H1 (cell line): ENCODE measurements at regions of chr9 and their contacts with region 1.

Region 1: GRCh38 chr9:35518226-35518821 is 28.4 kb downstream of the RUSC2 start:
- DNase-seq: no peak
- H3K4me3 ChIP-seq: no peak overlapping the region
- H3K27ac ChIP-seq: no peak overlapping the region
- H3K4me1 ChIP-seq: peaks cover 0 to 26% (median 8%) of the 10 kb centered on the region in 4 experiments; a peak in 6 of 7 replicates
- H3K27me3 ChIP-seq: no peaks in the 10 kb centered on the region
- CTCF ChIP-seq: no peak
- EP300 ChIP-seq: peak in 1 of 2 experiments; percentile 13; a peak in 1 of 3 replicates
- POLR2A ChIP-seq: no peak
- RAD21 ChIP-seq: no peak

Region 2: DNA sequence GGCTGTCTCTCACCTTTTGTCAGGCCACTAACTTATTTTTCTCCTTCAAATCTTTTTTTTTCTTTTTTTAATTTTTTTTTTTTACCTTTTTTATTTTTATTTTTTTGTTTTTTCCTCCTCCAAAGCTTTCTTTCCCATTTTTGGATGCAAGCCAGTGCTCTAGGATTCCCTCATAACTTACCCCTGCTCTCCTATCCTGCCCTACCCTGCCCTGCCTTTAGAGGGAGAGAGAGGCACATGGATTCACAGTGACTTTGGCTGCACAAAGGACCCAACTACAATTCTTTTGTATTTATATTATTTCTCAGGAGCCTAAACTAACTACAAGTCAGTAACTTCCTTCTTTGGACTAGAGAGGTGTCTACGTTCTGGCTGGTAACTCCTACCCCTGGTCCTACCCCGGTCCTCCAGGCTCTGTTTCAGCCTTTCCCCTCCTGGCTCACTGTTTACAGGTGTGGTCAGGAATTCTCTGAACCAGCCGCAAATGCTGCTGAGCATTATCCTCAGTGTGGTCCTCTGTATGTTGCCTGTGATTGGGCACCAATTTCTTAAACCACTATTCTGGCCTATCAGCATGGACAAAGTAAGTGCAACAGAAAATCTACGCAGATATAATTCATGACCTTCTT is 36.9 kb before region 1 on chr9:
- CTCF ChIA-PET with region 1: interaction called, 24 read pairs
- POLR2A ChIA-PET with region 1: no interaction called
- DNase-seq: peak in 1 of 2 experiments; percentile 65
- H3K4me3 ChIP-seq: no peak overlapping the region
- H3K27ac ChIP-seq: no peak overlapping the region
- H3K4me1 ChIP-seq: peaks cover 0 to 3% (median 1%) of the 10 kb centered on the region in 4 experiments; a peak in 1 of 7 replicates
- H3K27me3 ChIP-seq: no peaks in the 10 kb centered on the region
- CTCF ChIP-seq: peak; percentile 66 to 82 (median 75)
- EP300 ChIP-seq: no peak
- POLR2A ChIP-seq: no peak
- RAD21 ChIP-seq: peak; percentile 87 to 90

Region 3: DNA sequence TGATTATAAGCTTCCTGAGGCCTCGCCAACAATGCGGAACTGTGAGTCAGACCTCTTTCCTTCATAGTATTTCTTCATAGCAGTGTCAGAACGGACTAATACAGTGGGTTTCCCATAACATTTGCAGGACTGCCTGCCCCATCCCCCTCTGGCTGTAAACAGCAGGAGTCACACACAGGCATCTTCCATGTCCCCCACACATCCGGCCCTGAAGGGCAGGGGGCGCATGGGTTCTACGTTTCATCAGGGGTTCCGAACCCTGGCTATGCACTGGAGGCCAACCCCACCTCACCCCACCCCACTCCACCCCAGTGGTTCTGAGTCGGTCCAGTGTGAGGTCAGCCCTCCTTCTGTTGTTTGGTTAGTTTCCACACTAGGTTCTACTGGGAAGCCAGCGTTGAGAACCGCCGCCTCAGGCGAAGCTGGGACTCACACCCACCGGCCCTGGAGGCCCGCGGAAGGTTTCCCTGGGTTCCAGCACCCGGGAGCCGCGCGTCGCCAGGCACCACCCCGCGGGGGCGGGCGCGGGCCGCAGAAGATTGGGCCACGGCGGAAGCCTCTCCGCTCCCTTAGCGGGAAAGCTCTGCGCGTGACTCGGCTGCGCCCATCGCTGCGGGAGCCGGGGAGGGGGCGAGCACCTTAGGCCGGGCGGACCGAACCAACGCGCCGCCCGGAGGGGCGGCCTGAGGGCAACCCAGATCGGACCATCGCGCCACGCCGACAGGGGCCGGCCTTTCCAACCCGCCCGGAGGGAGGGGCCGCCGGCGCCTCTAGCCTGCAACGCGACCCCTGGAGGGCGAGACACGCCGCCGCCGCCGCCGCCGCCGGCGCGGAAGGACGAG is 28.8 kb before region 1 on chr9 and contains the start of gene RUSC2:
- CTCF ChIA-PET with region 1: interaction called, 11 read pairs
- POLR2A ChIA-PET with region 1: interaction called, 6 read pairs
- DNase-seq: peak; percentile 61 to 93
- H3K4me3 ChIP-seq: peak within 1 kb of the TSS; percentile 71 to 87 (median 74)
- H3K27ac ChIP-seq: peak within 1 kb of the TSS; percentile 60; the same call in 1 of the 2 replicates
- H3K4me1 ChIP-seq: peaks cover 0 to 8% (median 4%) of the 10 kb centered on the region in 4 experiments; a peak in 4 of 7 replicates
- H3K27me3 ChIP-seq: peaks cover 0 to 5% (median 0%) of the 10 kb centered on the region in 4 experiments; a peak in 1 of 7 replicates
- CTCF ChIP-seq: peak; percentile 57 to 60 (median 59)
- EP300 ChIP-seq: peak in 1 of 2 experiments; percentile 98; a peak in 2 of 3 replicates
- POLR2A ChIP-seq: peak in 1 of 2 experiments; percentile 84; a peak in 2 of 3 replicates
- RAD21 ChIP-seq: peak; percentile 67
- total RNA-seq, gene RUSC2: 6.8 and 7.9 TPM in 2 replicates

Region 4: DNA sequence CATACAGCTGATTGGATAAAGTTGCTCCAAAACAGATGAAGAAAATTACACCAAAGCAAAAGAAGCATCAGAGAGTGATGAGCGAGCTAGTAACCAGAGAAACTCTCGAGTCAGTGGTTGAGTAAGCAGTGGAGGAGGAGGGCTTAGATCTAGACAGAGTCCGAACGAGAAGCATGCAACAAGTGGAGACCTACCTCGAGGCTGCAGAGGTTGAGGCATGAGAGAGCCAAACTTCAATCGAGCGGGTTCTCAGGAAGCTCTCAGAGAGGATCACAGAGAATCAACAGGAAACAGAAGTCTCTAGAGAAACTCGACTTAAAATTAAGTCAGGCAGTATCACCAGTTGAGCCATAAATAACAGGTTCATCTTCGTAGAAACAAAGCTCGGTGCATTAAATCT is 22.3 kb before region 1 on chr9:
- CTCF ChIA-PET with region 1: interaction called, 15 read pairs
- POLR2A ChIA-PET with region 1: no interaction called
- DNase-seq: no peak
- H3K4me3 ChIP-seq: no peak overlapping the region
- H3K27ac ChIP-seq: no peak overlapping the region
- H3K4me1 ChIP-seq: no peaks in the 10 kb centered on the region
- H3K27me3 ChIP-seq: 0 out of 7 replicates have a peak, but pooled peaks cover 0 to 1% (median 0%) of the 10 kb centered on the region in 4 experiments
- CTCF ChIP-seq: no peak
- EP300 ChIP-seq: no peak
- POLR2A ChIP-seq: no peak
- RAD21 ChIP-seq: no peak

Region 5: GRCh38 chr9:35529161-35529823 is 11.0 kb after region 1 on chr9:
- CTCF ChIA-PET with region 1: interaction called, 32 read pairs
- POLR2A ChIA-PET with region 1: interaction called, 10 read pairs
- DNase-seq: no peak
- H3K4me3 ChIP-seq: no peak overlapping the region
- H3K27ac ChIP-seq: no peak overlapping the region
- H3K4me1 ChIP-seq: no peaks in the 10 kb centered on the region
- H3K27me3 ChIP-seq: no peaks in the 10 kb centered on the region
- CTCF ChIP-seq: no peak
- EP300 ChIP-seq: no peak
- POLR2A ChIP-seq: no peak
- RAD21 ChIP-seq: no peak

Region 6: GRCh38 chr9:35538361-35539234 is 20.3 kb after region 1 on chr9:
- CTCF ChIA-PET with region 1: interaction called, 8 read pairs
- POLR2A ChIA-PET with region 1: interaction called, 24 read pairs
- DNase-seq: peak in 1 of 2 experiments; percentile 73
- H3K4me3 ChIP-seq: peak overlapping the region; percentile 37 to 62 (median 46); a peak in 7 of 8 replicates
- H3K27ac ChIP-seq: no peak overlapping the region; the same call in 1 of the 2 replicates
- H3K4me1 ChIP-seq: peaks cover 10 to 22% (median 13%) of the 10 kb centered on the region in 4 experiments
- H3K27me3 ChIP-seq: no peaks in the 10 kb centered on the region
- CTCF ChIP-seq: no peak
- EP300 ChIP-seq: no peak
- POLR2A ChIP-seq: peak in 1 of 2 experiments; percentile 66; a peak in 2 of 3 replicates
- RAD21 ChIP-seq: 0 out of 4 replicates have a peak, but pooled peaks of 1 of the 2 experiments have one; percentile 2

Region 7: DNA sequence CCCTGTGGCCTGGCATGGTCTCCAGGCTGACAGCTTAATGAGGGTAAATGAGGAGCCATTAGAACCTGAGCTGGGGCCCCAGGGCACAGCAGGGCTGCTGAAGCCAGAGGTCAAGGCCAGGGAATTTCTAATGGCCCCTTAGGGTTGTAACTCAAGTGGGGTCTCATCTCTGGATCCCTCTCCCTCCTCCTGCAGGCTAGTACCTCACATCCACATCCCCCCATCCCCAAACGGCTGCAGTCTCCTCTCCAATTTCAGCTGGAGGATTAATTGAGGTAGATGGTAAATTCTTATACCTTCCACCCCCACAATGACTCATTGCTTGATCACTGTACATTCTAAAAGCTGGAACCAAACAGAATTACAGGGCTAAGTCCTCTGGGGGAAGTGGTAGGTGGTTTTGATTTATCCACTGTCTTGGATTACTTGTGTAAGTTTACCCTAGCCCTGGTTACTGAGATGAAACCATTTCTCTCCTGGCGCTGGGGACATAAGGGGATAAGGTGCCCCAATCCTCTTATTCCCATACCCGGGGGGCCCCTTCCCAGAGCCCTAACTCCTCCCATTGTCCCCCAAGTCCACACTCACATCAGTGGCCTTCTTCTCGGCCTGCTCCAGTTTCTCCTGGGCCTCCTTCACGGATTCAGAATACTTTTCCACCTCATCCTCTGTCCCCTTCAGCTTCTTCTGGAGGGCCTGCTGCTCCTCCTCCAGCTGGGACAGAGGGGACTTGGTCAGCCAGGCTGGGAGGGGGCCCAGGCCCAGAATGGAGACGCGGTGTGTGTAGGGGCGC is 170.4 kb after region 1 on chr9:
- CTCF ChIA-PET with region 1: no interaction called
- POLR2A ChIA-PET with region 1: no interaction called
- DNase-seq: no peak
- H3K4me3 ChIP-seq: peak overlapping the region; percentile 72 to 99 (median 82)
- H3K27ac ChIP-seq: no peak overlapping the region
- H3K4me1 ChIP-seq: peaks cover 6 to 15% (median 8%) of the 10 kb centered on the region in 4 experiments; a peak in 6 of 7 replicates
- H3K27me3 ChIP-seq: no peaks in the 10 kb centered on the region
- CTCF ChIP-seq: no peak
- EP300 ChIP-seq: no peak
- POLR2A ChIP-seq: no peak
- RAD21 ChIP-seq: no peak

Region 8: GRCh38 chr9:35716230-35716629 is 197.9 kb after region 1 on chr9:
- CTCF ChIA-PET with region 1: no interaction called
- POLR2A ChIA-PET with region 1: no interaction called
- DNase-seq: no peak
- H3K4me3 ChIP-seq: no peak overlapping the region
- H3K27ac ChIP-seq: no peak overlapping the region
- H3K4me1 ChIP-seq: no peaks in the 10 kb centered on the region
- H3K27me3 ChIP-seq: no peaks in the 10 kb centered on the region
- CTCF ChIP-seq: peak in 1 of 3 experiments; percentile 4; a peak in 1 of 4 replicates
- EP300 ChIP-seq: no peak
- POLR2A ChIP-seq: no peak
- RAD21 ChIP-seq: no peak